AG04450 (cell line): ENCODE measurements at regions of chr5 and their contacts with region 1.

Region 1: GRCh38 chr5:74927336-74927735 is 61.1 kb upstream of the FAM169A start:
- DNase-seq: no peak
- H3K4me3 ChIP-seq: no peak overlapping the region
- H3K27ac ChIP-seq: no peak overlapping the region
- H3K27me3 ChIP-seq: no peaks in the 10 kb centered on the region
- CTCF ChIP-seq: no peak

Region 2: GRCh38 chr5:74684900-74685851 is 242.2 kb before region 1 on chr5 and contains the start of gene HEXB:
- CTCF ChIA-PET with region 1: interaction called, 11 read pairs
- POLR2A ChIA-PET with region 1: no interaction called
- DNase-seq: no peak
- H3K4me3 ChIP-seq: peak within 1 kb of the TSS; percentile 81
- H3K27ac ChIP-seq: peak within 1 kb of the TSS; percentile 57
- H3K27me3 ChIP-seq: no peaks in the 10 kb centered on the region
- CTCF ChIP-seq: no peak
- polyA plus RNA-seq, gene HEXB: 193 and 246 TPM in 2 replicates

Region 3: DNA sequence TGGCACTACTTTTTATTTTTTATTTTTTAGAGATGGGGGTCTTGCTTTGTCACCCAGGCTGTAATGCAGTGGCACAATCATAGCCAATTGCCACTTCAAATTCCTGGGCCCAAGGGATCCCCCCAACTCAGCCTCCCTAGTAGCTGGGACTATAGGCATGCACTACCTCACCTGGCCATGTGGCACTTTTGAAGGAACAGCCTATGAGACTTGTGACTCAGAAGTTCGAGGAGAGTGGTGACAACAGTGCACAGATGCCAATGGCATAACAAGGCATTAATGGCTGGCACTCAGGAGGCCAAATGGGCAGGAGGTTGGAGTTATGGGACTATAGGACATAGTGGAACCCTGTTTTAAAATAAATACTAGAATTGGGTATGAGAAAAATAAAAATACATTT is 275.6 kb after region 1 on chr5:
- CTCF ChIA-PET with region 1: no interaction called
- POLR2A ChIA-PET with region 1: no interaction called
- DNase-seq: no peak
- H3K4me3 ChIP-seq: no peak overlapping the region
- H3K27ac ChIP-seq: no peak overlapping the region
- H3K27me3 ChIP-seq: no peaks in the 10 kb centered on the region
- CTCF ChIP-seq: no peak